ENCODE measurements at regions of chr5 and their contacts with region 1.

Region 1: DNA sequence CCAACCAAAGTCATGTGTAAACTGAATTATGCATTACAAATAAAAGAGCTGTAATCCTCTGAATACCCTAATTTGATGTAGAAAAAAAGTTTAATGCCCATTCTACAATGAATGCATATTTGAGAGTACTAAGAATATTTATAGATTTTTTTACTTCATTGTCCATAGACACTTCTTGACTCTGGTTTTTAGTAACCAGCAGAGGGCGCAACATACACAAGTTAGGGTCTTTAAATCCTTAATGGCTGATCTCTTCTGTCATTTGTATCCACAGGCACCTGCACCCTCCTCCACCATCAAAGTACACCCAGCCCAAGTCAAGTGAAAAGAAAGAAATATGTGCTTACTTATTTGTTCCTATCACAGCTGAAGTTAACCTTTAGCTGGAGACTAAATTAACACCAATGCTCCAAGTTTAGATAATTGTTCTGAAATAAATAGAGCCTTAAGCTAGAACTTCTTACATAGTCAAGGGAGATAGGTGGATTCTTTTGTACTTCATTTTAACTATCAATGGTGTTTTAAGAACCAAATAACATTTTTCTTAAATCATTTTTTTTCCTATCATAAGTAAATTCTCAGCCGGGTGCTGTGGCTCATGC is 524.2 kb upstream of the DAB2 start:
- DNase-seq: peak; percentile 77
- H3K4me3 ChIP-seq: no peak overlapping the region
- H3K27ac ChIP-seq: no peak overlapping the region
- H3K4me1 ChIP-seq: no peaks in the 10 kb centered on the region
- H3K27me3 ChIP-seq: no peaks in the 10 kb centered on the region
- CTCF ChIP-seq: peak; percentile 49 to 55
- POLR2A ChIP-seq: no peak

Region 2: GRCh38 chr5:39863926-39864552 is 84.9 kb before region 1 on chr5:
- CTCF ChIA-PET with region 1: no interaction called
- POLR2A ChIA-PET with region 1: no interaction called
- dilution Hi-C with region 1: no loop called
- intact Hi-C with region 1: no loop called
- DNase-seq: no peak
- H3K4me3 ChIP-seq: no peak overlapping the region
- H3K27ac ChIP-seq: no peak overlapping the region
- H3K4me1 ChIP-seq: no peaks in the 10 kb centered on the region
- H3K27me3 ChIP-seq: peaks cover 0 to 2% of the 10 kb centered on the region in 2 experiments
- CTCF ChIP-seq: no peak
- POLR2A ChIP-seq: no peak

Region 3: DNA sequence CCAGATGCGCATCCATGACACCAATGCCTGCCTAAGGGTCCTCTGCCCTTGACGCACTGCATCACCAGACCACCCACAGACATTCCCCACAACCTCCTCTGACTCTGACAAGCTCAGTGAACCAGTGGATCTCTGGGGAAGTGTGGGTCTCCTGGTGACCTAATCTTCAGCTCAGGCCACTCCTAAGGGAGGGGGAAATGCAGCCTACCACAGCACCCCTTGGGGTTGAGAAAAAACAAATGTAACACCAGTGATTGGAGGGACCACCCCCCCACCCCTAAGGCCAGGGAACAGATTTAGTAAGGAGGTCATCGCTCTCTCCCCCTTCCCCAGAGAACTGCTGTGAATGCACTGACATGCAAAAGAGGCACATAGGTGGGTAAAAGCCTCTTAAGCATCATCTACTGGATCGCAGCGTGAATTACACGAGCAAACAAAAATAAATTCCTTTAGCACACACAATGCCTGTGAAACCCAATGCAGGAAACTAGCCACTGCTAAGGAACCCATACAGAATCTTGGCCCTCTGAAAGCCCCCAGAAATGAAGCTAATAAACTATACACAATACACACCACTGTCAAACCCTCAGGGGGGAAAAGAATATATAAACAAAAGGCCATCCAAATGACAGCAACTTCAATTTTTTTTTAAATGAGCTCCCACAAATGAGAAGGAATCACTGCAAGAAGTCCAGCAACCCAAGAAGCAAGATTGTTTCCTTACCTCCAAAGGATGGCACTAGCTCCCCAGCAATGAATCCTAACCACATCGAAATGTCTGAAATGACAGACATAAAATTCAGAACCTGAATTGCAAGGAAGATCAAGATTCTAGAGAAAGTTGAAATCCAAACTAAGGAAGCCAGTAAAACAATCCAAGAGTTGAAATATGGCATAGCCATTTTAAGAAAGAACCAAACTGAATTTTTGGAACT is 217.1 kb after region 1 on chr5:
- CTCF ChIA-PET with region 1: interaction called, 23 read pairs
- POLR2A ChIA-PET with region 1: no interaction called
- dilution Hi-C with region 1: no loop called
- intact Hi-C with region 1: loop called (anchors 10 kb)
- DNase-seq: peak; percentile 44
- H3K4me3 ChIP-seq: no peak overlapping the region
- H3K27ac ChIP-seq: no peak overlapping the region
- H3K4me1 ChIP-seq: peaks cover 6% of the 10 kb centered on the region
- H3K27me3 ChIP-seq: no peaks in the 10 kb centered on the region
- CTCF ChIP-seq: peak in 1 of 2 donors; percentile 10
- POLR2A ChIP-seq: no peak

Region 4: GRCh38 chr5:40410231-40410861 is 461.4 kb after region 1 on chr5:
- CTCF ChIA-PET with region 1: interaction called, 4 read pairs
- POLR2A ChIA-PET with region 1: no interaction called
- dilution Hi-C with region 1: no loop called
- intact Hi-C with region 1: loop called (anchors 1 kb)
- DNase-seq: peak; percentile 97
- H3K4me3 ChIP-seq: peak overlapping the region in 1 of 3 experiments; percentile 24
- H3K27ac ChIP-seq: peak overlapping the region; percentile 81
- H3K4me1 ChIP-seq: peaks cover 24% of the 10 kb centered on the region
- H3K27me3 ChIP-seq: no peaks in the 10 kb centered on the region
- CTCF ChIP-seq: no peak
- POLR2A ChIP-seq: peak; percentile 13

Region 5: GRCh38 chr5:40551496-40552491 is 602.8 kb after region 1 on chr5:
- CTCF ChIA-PET with region 1: interaction called, 3 read pairs
- POLR2A ChIA-PET with region 1: no interaction called
- dilution Hi-C with region 1: no loop called
- intact Hi-C with region 1: loop called (anchors 5 kb)
- DNase-seq: peak; percentile 81
- H3K4me3 ChIP-seq: peak overlapping the region in 2 of 3 experiments; percentile 8 to 17
- H3K27ac ChIP-seq: peak overlapping the region; percentile 92
- H3K4me1 ChIP-seq: peaks cover 25% of the 10 kb centered on the region
- H3K27me3 ChIP-seq: no peaks in the 10 kb centered on the region
- CTCF ChIP-seq: no peak
- POLR2A ChIP-seq: peak; percentile 30

Region 6: DNA sequence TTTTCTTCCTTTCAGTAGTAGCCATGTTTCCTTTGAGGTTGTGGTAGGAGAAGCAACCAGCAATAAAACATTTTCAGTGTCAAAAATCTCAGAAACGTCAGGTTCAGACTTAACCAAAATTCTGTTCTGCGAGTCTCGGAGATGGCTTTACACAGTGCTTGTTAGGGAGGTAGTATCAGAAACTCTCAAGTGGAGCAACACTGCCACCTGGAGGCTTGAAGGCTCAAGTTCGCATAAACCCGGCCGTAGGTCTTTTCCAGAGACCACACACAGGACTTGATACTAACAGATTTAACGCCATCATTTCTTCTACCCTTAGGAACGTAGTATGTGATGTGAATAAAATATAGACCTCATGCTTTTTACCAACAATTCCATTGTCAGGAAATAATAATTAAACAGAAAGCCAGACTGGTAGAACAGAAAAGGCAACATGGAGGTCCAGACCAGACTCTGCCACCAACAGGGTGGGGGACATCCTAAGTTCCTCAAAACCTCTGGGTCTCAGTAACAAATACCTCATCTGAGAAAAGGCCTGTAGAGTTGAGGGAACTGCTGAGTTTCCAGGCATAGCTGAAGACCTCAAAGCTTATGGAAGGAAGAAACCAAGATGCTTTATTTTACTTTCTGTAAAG is 739.3 kb after region 1 on chr5:
- CTCF ChIA-PET with region 1: interaction called, 93 read pairs
- POLR2A ChIA-PET with region 1: no interaction called
- dilution Hi-C with region 1: no loop called
- intact Hi-C with region 1: loop called (anchors 1 kb)
- DNase-seq: peak; percentile 94
- H3K4me3 ChIP-seq: peak overlapping the region in 1 of 3 experiments; percentile 14
- H3K27ac ChIP-seq: peak overlapping the region; percentile 83
- H3K4me1 ChIP-seq: peaks cover 64% of the 10 kb centered on the region
- H3K27me3 ChIP-seq: no peaks in the 10 kb centered on the region
- CTCF ChIP-seq: peak; percentile 68 to 78
- POLR2A ChIP-seq: no peak

Measured in endothelial cell of umbilical vein (primary cell).